Activated naive CD4-positive, alpha-beta T cell treated with anti-CD3 and anti-CD28 coated beads for 36 hours (primary cell): ENCODE measurements at regions of chr6 and their contacts with region 1.

Region 1: GRCh38 chr6:158686791-158687381 is 37.0 kb downstream of the SYTL3 start:
- DNase-seq: peak; percentile 58
- H3K4me3 Mint-ChIP-seq: no peak overlapping the region
- H3K27ac Mint-ChIP-seq: peak overlapping the region; percentile 81
- H3K4me1 Mint-ChIP-seq: peaks cover 70% of the 10 kb centered on the region
- H3K27me3 Mint-ChIP-seq: no peaks in the 10 kb centered on the region

Region 2: DNA sequence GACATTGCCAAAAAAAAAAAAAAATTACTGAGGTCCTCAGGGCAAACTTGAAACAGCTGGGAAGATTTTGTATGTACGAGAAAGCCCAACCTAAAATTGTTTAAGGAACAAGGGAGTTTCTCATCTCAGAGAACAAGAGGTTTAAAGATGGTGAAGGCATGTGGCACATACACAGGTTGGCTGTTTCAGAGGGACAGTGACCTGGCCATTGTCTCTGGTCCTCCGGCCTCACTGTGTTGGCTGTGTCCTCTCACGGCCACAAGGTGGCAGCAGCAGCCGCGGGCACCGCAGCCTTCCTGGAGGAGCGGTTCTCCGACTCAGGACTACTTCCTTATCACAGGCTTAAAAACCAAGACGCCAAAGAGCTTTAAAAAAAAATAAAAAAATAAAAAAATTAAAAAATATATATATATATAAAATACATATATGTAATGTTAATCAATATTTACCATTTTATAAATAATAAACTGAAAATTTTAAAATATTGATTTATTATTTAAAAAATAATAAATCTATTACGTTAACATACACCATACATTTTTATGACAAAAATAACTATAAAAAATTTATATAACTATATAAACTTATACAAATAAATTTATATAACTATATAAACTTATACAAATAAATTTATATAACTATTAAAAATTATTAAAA is 466.0 kb before region 1 on chr6:
- CTCF ChIA-PET with region 1: interaction called, 6 read pairs
- intact Hi-C with region 1: loop called (anchors 1 kb)
- DNase-seq: peak; percentile 83
- H3K4me3 Mint-ChIP-seq: no peak overlapping the region
- H3K27ac Mint-ChIP-seq: no peak overlapping the region
- H3K4me1 Mint-ChIP-seq: no peaks in the 10 kb centered on the region
- H3K27me3 Mint-ChIP-seq: no peaks in the 10 kb centered on the region

Region 3: DNA sequence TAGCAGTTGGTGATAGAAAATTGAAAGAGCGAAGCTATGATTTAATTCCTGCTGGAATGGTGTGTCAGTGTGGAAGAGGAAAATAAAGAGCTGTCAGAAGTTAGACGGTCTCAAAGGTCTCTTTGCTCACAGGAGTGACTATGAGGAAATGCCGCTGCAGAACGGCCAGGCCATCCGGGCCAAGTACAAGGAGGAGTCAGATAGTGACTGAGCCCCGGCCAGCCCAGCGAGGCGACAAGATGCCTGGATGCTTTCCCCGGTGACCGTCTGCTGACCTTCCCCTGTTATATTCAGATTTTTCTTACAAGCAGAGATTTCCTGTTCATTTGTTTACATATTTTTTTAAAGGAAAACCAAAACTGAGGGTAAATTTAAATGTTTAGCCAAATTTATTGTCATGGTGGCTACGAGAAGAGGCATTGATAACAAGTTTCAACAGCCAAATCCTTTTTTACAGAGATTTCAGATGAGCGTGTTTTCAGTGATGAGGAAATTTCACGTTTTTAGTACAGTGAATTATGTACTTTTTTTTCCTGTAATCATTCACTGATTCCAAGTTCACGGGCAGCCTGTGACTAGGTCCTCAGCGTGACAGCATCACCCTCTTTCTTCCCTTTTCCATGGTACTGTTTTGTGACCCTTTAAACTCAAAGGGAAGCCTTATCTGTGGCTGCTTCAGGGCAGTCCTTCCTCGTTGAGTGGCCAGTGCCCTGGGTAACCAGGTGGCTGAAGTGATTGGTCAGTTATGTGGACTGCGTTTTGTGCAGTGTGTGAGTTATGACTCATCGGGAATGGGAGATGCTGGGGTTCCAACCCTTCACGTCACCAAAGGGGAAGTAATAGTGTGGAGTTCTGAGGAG is 55.0 kb before region 1 on chr6:
- CTCF ChIA-PET with region 1: interaction called, 18 read pairs
- intact Hi-C with region 1: loop called (anchors 1 kb)
- DNase-seq: no peak
- H3K4me3 Mint-ChIP-seq: no peak overlapping the region
- H3K27ac Mint-ChIP-seq: peak overlapping the region; percentile 83
- H3K4me1 Mint-ChIP-seq: peaks cover 46% of the 10 kb centered on the region
- H3K27me3 Mint-ChIP-seq: no peaks in the 10 kb centered on the region

Region 4: GRCh38 chr6:158644231-158645063 is 42.4 kb before region 1 on chr6 and contains the start of gene DYNLT1:
- CTCF ChIA-PET with region 1: interaction called, 14 read pairs
- intact Hi-C with region 1: no loop called
- DNase-seq: peak; percentile 91
- H3K4me3 Mint-ChIP-seq: peak within 1 kb of the TSS; percentile 97
- H3K27ac Mint-ChIP-seq: peak within 1 kb of the TSS; percentile 99
- H3K4me1 Mint-ChIP-seq: peaks cover 76% of the 10 kb centered on the region
- H3K27me3 Mint-ChIP-seq: no peaks in the 10 kb centered on the region
- total RNA-seq, gene DYNLT1: 99.1 to 107 TPM

Region 5: GRCh38 chr6:158704181-158704822 is 17.4 kb after region 1 on chr6:
- CTCF ChIA-PET with region 1: interaction called, 17 read pairs
- intact Hi-C with region 1: no loop called
- DNase-seq: peak; percentile 80
- H3K4me3 Mint-ChIP-seq: peak overlapping the region; percentile 58
- H3K27ac Mint-ChIP-seq: no peak overlapping the region
- H3K4me1 Mint-ChIP-seq: peaks cover 15% of the 10 kb centered on the region
- H3K27me3 Mint-ChIP-seq: no peaks in the 10 kb centered on the region